ENCODE measurements at regions of chr11 and their contacts with region 1.

Region 1: DNA sequence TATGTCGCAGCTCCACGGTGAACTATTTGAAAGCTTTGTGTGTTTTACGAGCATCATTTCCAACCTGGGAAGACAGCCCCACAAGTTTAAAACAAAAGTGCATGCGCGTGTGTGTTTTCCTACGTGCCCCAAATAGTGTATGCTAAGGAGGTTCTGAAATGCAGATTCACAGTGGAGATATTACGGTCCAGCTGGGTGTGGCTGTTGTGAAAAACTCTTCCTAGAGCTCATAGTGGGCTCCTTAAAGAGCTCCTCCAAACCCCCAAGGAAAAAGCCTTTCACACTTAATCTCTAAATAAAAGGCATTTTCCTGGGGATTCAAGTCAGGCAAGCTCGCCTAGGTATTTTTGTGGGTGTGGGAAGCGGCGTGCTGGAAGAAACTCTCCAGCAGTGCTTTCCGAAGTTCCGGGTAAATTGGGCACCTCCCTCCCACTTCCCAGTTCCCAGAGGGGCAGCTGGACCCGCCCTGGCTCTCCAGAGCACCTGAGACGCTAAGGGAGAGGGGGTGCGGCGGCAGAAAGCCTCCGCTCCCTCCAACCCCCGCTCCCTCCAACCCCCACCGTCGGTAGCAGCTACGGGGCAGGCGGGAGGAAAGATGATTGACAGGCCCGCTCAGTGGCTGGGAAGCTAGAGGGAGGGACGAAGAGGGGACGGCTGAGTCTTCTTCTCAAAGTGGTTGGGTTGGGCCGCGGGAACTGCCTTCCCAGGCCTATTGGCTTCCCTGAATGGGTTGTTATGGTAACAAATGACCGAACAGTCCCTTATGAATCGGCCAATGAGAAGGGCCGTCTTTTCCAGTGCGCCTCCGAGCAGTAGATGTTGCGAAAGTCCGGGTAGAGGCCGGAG is 558 bp upstream of the PCF11 start:
- DNase-seq: peak in 9 of 10 donors; percentile 87 to 99 (median 98)
- ATAC-seq: peak; percentile 86 to 88
- H3K4me3 Mint-ChIP-seq: peak overlapping the region; percentile 93 to 100 (median 100)
- H3K27ac Mint-ChIP-seq: peak overlapping the region; percentile 99 to 100 (median 100)
- H3K4me1 Mint-ChIP-seq: peaks cover 10 to 27% (median 25%) of the 10 kb centered on the region in 4 donors
- H3K27me3 Mint-ChIP-seq: no peaks in the 10 kb centered on the region

Region 2: DNA sequence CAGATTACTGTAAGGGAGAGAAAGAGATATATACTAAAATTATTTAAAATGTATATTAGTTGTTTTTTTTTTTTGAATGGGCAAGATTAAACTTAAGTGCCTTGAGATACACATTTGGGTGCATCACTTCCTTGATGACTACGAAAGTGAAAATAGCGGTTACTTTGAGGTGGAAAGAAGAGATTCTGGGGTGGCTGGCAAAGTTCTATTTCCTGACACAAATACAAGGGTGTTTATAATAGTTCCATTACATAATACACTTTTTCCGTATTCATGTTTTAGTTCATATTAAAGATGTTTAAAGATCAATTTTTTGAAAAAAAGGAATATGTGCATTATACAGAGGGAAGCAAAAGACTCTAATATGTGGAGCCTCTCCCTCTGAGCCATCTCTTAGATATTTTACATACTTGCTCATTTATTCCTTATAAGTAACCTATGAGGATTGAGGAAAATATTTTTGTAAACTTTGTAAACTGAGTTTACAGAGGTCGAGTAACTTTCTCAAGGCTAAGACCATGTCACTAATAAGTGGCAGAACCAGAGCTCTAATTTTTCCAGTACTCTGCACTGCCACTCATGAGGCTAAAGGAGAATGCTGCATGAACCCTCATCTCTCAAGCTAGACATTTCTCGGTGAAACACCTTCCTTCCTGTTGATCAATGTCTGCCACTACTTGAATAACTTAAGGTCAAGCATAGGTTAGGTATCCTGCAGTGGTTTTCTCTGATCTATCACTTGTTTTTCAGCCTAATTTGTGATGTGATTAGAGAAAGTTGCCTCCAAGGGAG is 196.2 kb before region 1 on chr11:
- POLR2A ChIA-PET with region 1: interaction called, 28 read pairs
- DNase-seq: peak in 9 of 10 donors; percentile 23 to 89 (median 70)
- ATAC-seq: peak; percentile 84 to 91
- H3K4me3 Mint-ChIP-seq: peak overlapping the region; percentile 50 to 90 (median 74)
- H3K27ac Mint-ChIP-seq: peak overlapping the region; percentile 90 to 99 (median 96)
- H3K4me1 Mint-ChIP-seq: peaks cover 39 to 95% (median 85%) of the 10 kb centered on the region in 4 donors
- H3K27me3 Mint-ChIP-seq: no peaks in the 10 kb centered on the region

Region 3: DNA sequence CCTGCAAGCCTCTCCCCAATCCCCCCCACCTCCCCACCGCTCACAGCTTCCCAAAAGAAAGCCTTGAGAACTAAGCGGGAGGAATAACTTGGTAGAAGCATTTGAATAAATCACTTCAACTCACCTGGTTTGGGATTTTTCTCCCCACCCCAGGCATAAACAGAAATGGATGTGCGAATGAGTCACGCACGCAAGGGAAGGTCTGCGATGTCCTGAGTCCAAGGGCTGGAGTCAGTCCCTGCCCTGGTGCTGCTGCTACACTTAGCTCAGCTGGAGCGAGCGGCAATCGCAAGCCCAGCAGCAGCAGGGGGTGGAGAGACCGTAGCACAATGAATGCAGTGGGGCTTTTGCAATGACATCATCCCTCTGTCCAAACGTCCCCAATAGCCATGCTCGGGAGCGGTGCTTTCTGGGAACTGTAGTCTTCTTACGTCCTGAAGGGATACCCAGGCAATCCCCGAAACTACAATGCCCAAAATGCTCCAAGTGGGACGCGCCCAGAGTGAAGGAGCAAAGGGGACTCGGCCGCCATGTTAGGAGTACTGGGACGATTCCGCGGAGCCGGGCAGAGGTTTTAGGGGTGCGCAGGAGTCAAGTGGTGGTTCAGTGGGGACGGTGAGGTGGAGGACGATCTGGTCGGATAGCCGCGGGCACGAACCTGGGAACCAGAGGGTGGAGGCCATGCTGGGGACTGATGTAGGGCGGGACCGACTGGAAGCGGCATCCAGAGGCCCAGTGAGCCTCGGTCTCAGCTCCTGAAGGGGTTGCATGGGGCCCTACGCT is 84.6 kb before region 1 on chr11 and contains the start of gene RAB30:
- POLR2A ChIA-PET with region 1: interaction called, 67 read pairs
- DNase-seq: peak; percentile 70 to 98 (median 94)
- ATAC-seq: peak; percentile 94 to 95
- H3K4me3 Mint-ChIP-seq: no peak within 1 kb of the TSS
- H3K27ac Mint-ChIP-seq: no peak within 1 kb of the TSS
- H3K4me1 Mint-ChIP-seq: peaks cover 9 to 43% (median 26%) of the 10 kb centered on the region in 4 donors
- H3K27me3 Mint-ChIP-seq: no peaks in the 10 kb centered on the region
- polyA plus RNA-seq, gene RAB30: 10.7 to 17.4 (median 12.8) TPM

Region 4: GRCh38 chr11:83168756-83169155 is 12.4 kb after region 1 on chr11:
- POLR2A ChIA-PET with region 1: interaction called, 23 read pairs
- DNase-seq: no peak
- ATAC-seq: no peak
- H3K4me3 Mint-ChIP-seq: peak overlapping the region in 9 of 10 donors; percentile 7 to 84 (median 59)
- H3K27ac Mint-ChIP-seq: peak overlapping the region in 7 of 10 donors; percentile 0 to 69 (median 50)
- H3K4me1 Mint-ChIP-seq: peaks cover 31 to 89% (median 80%) of the 10 kb centered on the region in 4 donors
- H3K27me3 Mint-ChIP-seq: no peaks in the 10 kb centered on the region

Region 5: DNA sequence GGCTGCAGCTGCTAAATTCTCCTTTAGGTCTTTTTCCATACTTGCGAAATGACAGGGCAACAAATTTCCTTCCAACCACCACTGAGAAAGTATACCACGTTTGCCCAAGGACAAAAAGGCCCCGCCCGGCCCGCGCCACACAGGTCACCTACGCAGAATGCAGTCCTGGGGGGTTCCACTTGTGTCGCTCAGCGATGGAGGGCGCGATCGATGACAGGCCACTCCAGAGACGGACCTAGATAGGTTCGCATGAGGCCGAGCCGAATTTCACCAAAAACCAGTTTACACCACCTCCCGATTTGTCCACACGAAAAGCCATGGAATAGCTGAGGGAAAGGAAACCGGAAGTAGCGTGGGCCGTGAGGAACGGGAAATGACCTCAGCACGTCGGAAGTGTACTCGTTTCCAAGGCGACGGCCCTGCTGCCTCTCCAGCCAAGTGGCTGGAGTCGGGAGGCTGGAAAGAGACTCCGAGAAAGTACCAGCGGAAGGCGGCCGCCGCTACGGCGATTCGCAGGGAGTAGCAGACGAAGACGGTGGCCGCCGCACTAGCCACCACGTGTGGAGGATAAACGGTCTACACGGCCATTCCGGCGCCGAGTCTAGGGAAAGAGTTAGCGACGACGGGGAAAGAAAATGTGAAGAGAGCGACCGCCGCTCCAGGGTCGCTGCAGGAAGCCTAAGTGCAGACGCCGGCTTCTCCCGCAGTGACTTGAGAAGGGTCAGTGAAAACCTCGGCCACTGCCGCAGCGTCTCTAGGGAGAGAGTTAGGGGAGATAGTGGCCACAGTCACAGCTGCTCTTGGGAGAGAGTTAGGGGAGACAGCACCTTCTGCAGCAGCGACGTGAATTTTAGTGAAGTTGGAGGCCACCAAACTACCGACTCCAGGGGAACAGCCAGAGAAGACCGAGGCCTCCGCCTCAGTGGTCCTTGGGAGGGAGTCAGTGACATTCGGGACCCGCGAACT is 37.2 kb after region 1 on chr11 and contains the start of gene ANKRD42:
- POLR2A ChIA-PET with region 1: interaction called, 33 read pairs
- DNase-seq: peak; percentile 69 to 93 (median 86)
- ATAC-seq: peak; percentile 72 to 76
- H3K4me3 Mint-ChIP-seq: peak within 1 kb of the TSS; percentile 93 to 100 (median 100)
- H3K27ac Mint-ChIP-seq: peak within 1 kb of the TSS; percentile 94 to 100 (median 100)
- H3K4me1 Mint-ChIP-seq: peaks cover 28 to 54% (median 51%) of the 10 kb centered on the region in 4 donors
- H3K27me3 Mint-ChIP-seq: no peaks in the 10 kb centered on the region
- polyA plus RNA-seq, gene ANKRD42: 3.4 to 6.5 (median 5.5) TPM